ENCODE measurements at regions of chr12 and their contacts with region 1.

Region 1: GRCh38 chr12:49342066-49342913 is 4.4 kb upstream of the DNAJC22 start:
- DNase-seq: peak; percentile 60 to 75 (median 64)
- H3K4me3 ChIP-seq: peak overlapping the region; percentile 30 to 53
- H3K4me3 Mint-ChIP-seq: peak overlapping the region; percentile 49 to 89 (median 78)
- H3K27ac ChIP-seq: no peak overlapping the region
- H3K27ac Mint-ChIP-seq: peak overlapping the region in 4 of 7 donors; percentile 55 to 79 (median 65)
- H3K4me1 ChIP-seq: peaks cover 52% of the 10 kb centered on the region
- H3K4me1 Mint-ChIP-seq: peaks cover 19 to 64% (median 40%) of the 10 kb centered on the region in 4 donors
- H3K27me3 ChIP-seq: peaks cover 47% of the 10 kb centered on the region
- H3K27me3 Mint-ChIP-seq: peaks cover 25 to 56% of the 10 kb centered on the region in 2 donors

Region 2: GRCh38 chr12:49264738-49265515 is 77.4 kb before region 1 on chr12 and contains the start of gene TUBA1C:
- CTCF ChIA-PET with region 1: interaction called, 4 read pairs
- POLR2A ChIA-PET with region 1: interaction called, 11 read pairs
- intact Hi-C with region 1: no loop called
- DNase-seq: peak; percentile 80 to 84 (median 82)
- H3K4me3 ChIP-seq: peak within 1 kb of the TSS; percentile 65 to 96
- H3K4me3 Mint-ChIP-seq: peak within 1 kb of the TSS; percentile 90 to 99 (median 96)
- H3K27ac ChIP-seq: peak within 1 kb of the TSS; percentile 74
- H3K27ac Mint-ChIP-seq: peak within 1 kb of the TSS; percentile 92 to 98 (median 94)
- H3K4me1 ChIP-seq: peaks cover 36% of the 10 kb centered on the region
- H3K4me1 Mint-ChIP-seq: peaks cover 8 to 42% (median 23%) of the 10 kb centered on the region in 4 donors
- H3K27me3 ChIP-seq: no peaks in the 10 kb centered on the region
- H3K27me3 Mint-ChIP-seq: no peaks in the 10 kb centered on the region
- total RNA-seq, gene TUBA1C: 50.6 to 51.2 TPM

Region 3: GRCh38 chr12:49279706-49280159 is 62.6 kb before region 1 on chr12:
- CTCF ChIA-PET with region 1: interaction called, 17 read pairs
- POLR2A ChIA-PET with region 1: interaction called, 6 read pairs
- intact Hi-C with region 1: no loop called
- DNase-seq: no peak
- H3K4me3 ChIP-seq: no peak overlapping the region
- H3K4me3 Mint-ChIP-seq: no peak overlapping the region
- H3K27ac ChIP-seq: no peak overlapping the region
- H3K27ac Mint-ChIP-seq: no peak overlapping the region
- H3K4me1 ChIP-seq: no peaks in the 10 kb centered on the region
- H3K4me1 Mint-ChIP-seq: no peaks in the 10 kb centered on the region
- H3K27me3 ChIP-seq: no peaks in the 10 kb centered on the region
- H3K27me3 Mint-ChIP-seq: peaks cover 5 to 12% of the 10 kb centered on the region in 2 donors

Region 4: DNA sequence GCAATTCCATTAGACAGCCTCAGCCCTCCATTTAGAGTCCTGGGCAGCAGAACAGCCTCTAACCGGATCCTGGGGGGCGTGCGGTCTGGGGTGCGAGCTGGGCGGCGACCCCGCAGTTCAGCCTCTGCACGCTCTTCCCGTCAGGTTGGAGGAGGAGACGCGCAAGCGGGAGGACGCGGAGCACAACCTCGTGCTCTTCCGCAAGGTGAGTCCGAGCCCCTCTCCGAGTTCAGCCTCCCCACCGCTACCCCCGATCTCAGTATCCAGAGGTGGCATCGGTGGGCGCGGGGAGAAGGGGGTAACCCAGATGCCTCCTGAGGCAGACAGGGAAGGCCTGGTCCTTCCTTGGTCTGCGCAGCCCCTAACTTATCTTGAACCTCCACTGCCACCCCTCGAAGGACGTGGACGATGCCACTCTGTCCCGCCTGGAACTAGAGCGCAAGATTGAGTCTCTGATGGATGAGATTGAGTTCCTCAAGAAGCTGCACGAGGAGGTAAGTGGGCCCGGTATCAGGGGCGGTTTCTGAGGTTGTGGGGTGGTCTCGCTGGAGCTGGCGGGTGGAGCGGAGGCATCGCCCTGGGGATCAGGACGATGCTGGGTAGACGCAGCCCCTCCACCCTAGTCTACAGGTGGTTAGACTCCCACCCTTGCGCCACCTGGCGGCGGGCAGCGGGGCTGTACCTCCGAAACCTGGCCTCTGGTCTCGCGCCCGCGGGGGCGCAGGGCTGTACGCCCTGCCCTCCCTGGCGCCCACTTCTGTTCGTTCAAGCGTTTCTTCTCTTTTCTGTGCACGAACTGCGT is 46.1 kb before region 1 on chr12:
- CTCF ChIA-PET with region 1: interaction called, 70 read pairs
- POLR2A ChIA-PET with region 1: interaction called, 9 read pairs
- intact Hi-C with region 1: no loop called
- DNase-seq: peak; percentile 53 to 64 (median 61)
- H3K4me3 ChIP-seq: peak overlapping the region in 1 of 2 donors; percentile 36
- H3K4me3 Mint-ChIP-seq: peak overlapping the region; percentile 62 to 79 (median 74)
- H3K27ac ChIP-seq: no peak overlapping the region
- H3K27ac Mint-ChIP-seq: peak overlapping the region in 1 of 7 donors; percentile 53
- H3K4me1 ChIP-seq: peaks cover 20% of the 10 kb centered on the region
- H3K4me1 Mint-ChIP-seq: peaks cover 5 to 28% (median 17%) of the 10 kb centered on the region in 4 donors
- H3K27me3 ChIP-seq: peaks cover 32% of the 10 kb centered on the region
- H3K27me3 Mint-ChIP-seq: peaks cover 34 to 42% of the 10 kb centered on the region in 2 donors

Region 5: DNA sequence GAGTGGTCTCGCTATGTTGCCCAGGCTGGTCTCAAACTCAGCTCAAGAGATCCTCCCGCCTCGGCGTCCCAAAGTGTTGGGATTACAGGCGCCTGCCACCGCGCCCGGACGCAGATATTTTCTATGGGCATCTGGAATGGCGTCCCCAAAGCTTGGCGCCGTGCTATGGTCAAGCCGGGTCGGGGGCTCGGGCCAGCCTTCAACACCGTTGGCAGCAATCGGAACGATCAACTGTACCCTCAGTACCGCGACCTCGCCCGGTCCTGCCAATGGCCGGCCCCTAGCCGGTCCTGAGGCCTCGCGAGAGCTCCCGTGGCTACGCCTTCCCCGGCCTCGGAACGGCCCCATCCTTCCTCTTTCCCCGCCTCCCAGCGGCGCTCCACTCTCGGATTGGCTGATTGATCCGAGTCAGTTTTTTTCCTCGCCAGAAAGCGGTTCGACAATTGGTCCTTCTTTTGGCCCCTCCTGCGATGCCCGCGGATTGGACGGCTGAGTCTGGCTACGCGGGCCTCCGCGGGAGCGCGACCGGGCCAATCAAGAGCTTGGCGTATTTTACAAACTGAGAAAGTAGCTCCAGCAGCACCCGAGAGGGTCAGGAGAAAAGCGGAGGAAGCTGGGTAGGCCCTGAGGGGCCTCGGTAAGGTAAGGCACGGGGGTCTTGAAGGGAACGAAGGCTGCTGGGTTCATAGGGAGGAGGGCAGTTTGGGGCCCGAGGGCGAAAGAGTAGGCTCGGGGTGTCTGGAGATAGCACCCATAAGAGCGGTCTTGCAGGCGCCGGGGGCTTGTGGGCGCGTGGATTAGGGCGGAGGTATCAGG is 19.4 kb before region 1 on chr12 and contains the start of gene TROAP:
- CTCF ChIA-PET with region 1: interaction called, 21 read pairs
- POLR2A ChIA-PET with region 1: interaction called, 12 read pairs
- intact Hi-C with region 1: loop called (anchors 1 kb)
- DNase-seq: peak; percentile 97 to 99 (median 97)
- H3K4me3 ChIP-seq: peak within 1 kb of the TSS; percentile 54 to 77
- H3K4me3 Mint-ChIP-seq: peak within 1 kb of the TSS; percentile 92 to 99 (median 96)
- H3K27ac ChIP-seq: peak within 1 kb of the TSS; percentile 51
- H3K27ac Mint-ChIP-seq: peak within 1 kb of the TSS; percentile 75 to 96 (median 91)
- H3K4me1 ChIP-seq: peaks cover 14% of the 10 kb centered on the region
- H3K4me1 Mint-ChIP-seq: peaks cover 14 to 24% (median 15%) of the 10 kb centered on the region in 4 donors
- H3K27me3 ChIP-seq: no peaks in the 10 kb centered on the region
- H3K27me3 Mint-ChIP-seq: no peaks in the 10 kb centered on the region
- total RNA-seq, gene TROAP: 0.26 to 0.80 TPM

Region 6: GRCh38 chr12:49331380-49332222 is 10.7 kb before region 1 on chr12:
- CTCF ChIA-PET with region 1: interaction called, 48 read pairs
- POLR2A ChIA-PET with region 1: interaction called, 3 read pairs
- intact Hi-C with region 1: no loop called
- DNase-seq: no peak
- H3K4me3 ChIP-seq: no peak overlapping the region
- H3K4me3 Mint-ChIP-seq: no peak overlapping the region
- H3K27ac ChIP-seq: no peak overlapping the region
- H3K27ac Mint-ChIP-seq: no peak overlapping the region
- H3K4me1 ChIP-seq: peaks cover 6% of the 10 kb centered on the region
- H3K4me1 Mint-ChIP-seq: peaks cover 9 to 12% (median 10%) of the 10 kb centered on the region in 4 donors
- H3K27me3 ChIP-seq: peaks cover 20% of the 10 kb centered on the region
- H3K27me3 Mint-ChIP-seq: peaks cover 28 to 35% of the 10 kb centered on the region in 2 donors

Region 7: GRCh38 chr12:49388682-49389386 is 46.5 kb after region 1 on chr12:
- CTCF ChIA-PET with region 1: no interaction called
- POLR2A ChIA-PET with region 1: no interaction called
- intact Hi-C with region 1: no loop called
- DNase-seq: peak; percentile 38 to 65 (median 51)
- H3K4me3 ChIP-seq: no peak overlapping the region
- H3K4me3 Mint-ChIP-seq: peak overlapping the region in 7 of 8 donors; percentile 1 to 69 (median 49)
- H3K27ac ChIP-seq: no peak overlapping the region
- H3K27ac Mint-ChIP-seq: peak overlapping the region in 1 of 7 donors; percentile 6
- H3K4me1 ChIP-seq: no peaks in the 10 kb centered on the region
- H3K4me1 Mint-ChIP-seq: peaks cover 4 to 10% (median 5%) of the 10 kb centered on the region in 4 donors
- H3K27me3 ChIP-seq: no peaks in the 10 kb centered on the region
- H3K27me3 Mint-ChIP-seq: no peaks in the 10 kb centered on the region